ENCODE measurements at regions of chr11 and their contacts with region 1.

Region 1: GRCh38 chr11:102592634-102593581 is 32.2 kb downstream of the MMP20 start:
- DNase-seq: peak in 1 of 2 experiments; percentile 54
- H3K4me3 ChIP-seq: no peak overlapping the region
- H3K4me3 Mint-ChIP-seq: no peak overlapping the region
- H3K27ac Mint-ChIP-seq: no peak overlapping the region
- H3K4me1 ChIP-seq: peaks cover 25% of the 10 kb centered on the region
- H3K4me1 Mint-ChIP-seq: peaks cover 17% of the 10 kb centered on the region
- H3K27me3 ChIP-seq: no peaks in the 10 kb centered on the region
- H3K27me3 Mint-ChIP-seq: no peaks in the 10 kb centered on the region
- CTCF ChIP-seq: peak; percentile 84 to 88

Region 2: DNA sequence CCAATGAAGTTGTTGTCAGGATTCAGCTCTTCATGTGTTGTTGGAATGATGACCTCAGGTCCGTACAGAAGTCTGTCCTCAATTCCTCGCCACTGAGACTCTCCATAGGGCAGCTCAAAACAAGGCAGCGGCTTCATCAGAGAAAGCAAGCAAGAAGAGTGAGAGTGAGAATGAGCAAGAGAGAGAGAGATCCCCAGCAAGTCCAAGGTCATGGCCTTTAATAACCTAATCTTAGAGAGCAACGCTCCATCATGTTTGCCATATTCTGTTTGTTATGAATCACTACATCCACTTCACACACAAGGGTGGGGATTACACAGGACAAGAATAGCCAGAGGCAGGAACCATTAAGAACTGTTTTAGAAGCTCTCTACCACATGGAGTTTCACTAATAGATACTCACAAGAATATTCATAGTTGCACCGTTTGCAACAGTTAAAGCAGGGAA is 39.0 kb before region 1 on chr11:
- CTCF ChIA-PET with region 1: no interaction called
- POLR2A ChIA-PET with region 1: no interaction called
- intact Hi-C with region 1: loop called (anchors 2 kb)
- DNase-seq: no peak
- H3K4me3 ChIP-seq: no peak overlapping the region
- H3K4me3 Mint-ChIP-seq: no peak overlapping the region
- H3K27ac Mint-ChIP-seq: peak overlapping the region; percentile 87
- H3K4me1 ChIP-seq: peaks cover 36% of the 10 kb centered on the region
- H3K4me1 Mint-ChIP-seq: peaks cover 30% of the 10 kb centered on the region
- H3K27me3 ChIP-seq: no peaks in the 10 kb centered on the region
- H3K27me3 Mint-ChIP-seq: no peaks in the 10 kb centered on the region
- CTCF ChIP-seq: no peak

Region 3: GRCh38 chr11:102577182-102577581 is 15.7 kb before region 1 on chr11:
- CTCF ChIA-PET with region 1: no interaction called
- POLR2A ChIA-PET with region 1: no interaction called
- intact Hi-C with region 1: no loop called
- DNase-seq: no peak
- H3K4me3 ChIP-seq: no peak overlapping the region
- H3K4me3 Mint-ChIP-seq: no peak overlapping the region
- H3K27ac Mint-ChIP-seq: no peak overlapping the region
- H3K4me1 ChIP-seq: peaks cover 5% of the 10 kb centered on the region
- H3K4me1 Mint-ChIP-seq: peaks cover 8% of the 10 kb centered on the region
- H3K27me3 ChIP-seq: no peaks in the 10 kb centered on the region; the same call in 1 of the 2 replicates
- H3K27me3 Mint-ChIP-seq: no peaks in the 10 kb centered on the region
- CTCF ChIP-seq: no peak